ENCODE measurements at regions of chr17 and their contacts with region 1.

Region 1: GRCh38 chr17:81253358-81254131 is 14.4 kb downstream of the NDUFAF8 start:
- DNase-seq: peak; percentile 34 to 74 (median 63)
- ATAC-seq: peak; percentile 83
- H3K4me3 ChIP-seq: no peak overlapping the region
- H3K4me3 Mint-ChIP-seq: no peak overlapping the region
- H3K27ac ChIP-seq: no peak overlapping the region
- H3K27ac Mint-ChIP-seq: peak overlapping the region in 5 of 9 donors; percentile 2 to 67 (median 27)
- H3K4me1 ChIP-seq: no peaks in the 10 kb centered on the region
- H3K4me1 Mint-ChIP-seq: peaks cover 6 to 10% (median 7%) of the 10 kb centered on the region in 7 donors
- H3K27me3 ChIP-seq: no peaks in the 10 kb centered on the region
- H3K27me3 Mint-ChIP-seq: no peaks in the 10 kb centered on the region

Region 2: GRCh38 chr17:81387100-81388090 is 133.8 kb after region 1 on chr17:
- CTCF ChIA-PET with region 1: no interaction called
- POLR2A ChIA-PET with region 1: no interaction called
- intact Hi-C with region 1: loop called in 1 of 2 experiments (anchors 10 kb)
- DNase-seq: peak in 1 of 9 donors; percentile 71
- ATAC-seq: peak; percentile 67
- H3K4me3 ChIP-seq: peak overlapping the region; percentile 38
- H3K4me3 Mint-ChIP-seq: peak overlapping the region; percentile 44 to 83 (median 70)
- H3K27ac ChIP-seq: no peak overlapping the region
- H3K27ac Mint-ChIP-seq: no peak overlapping the region
- H3K4me1 ChIP-seq: no peaks in the 10 kb centered on the region
- H3K4me1 Mint-ChIP-seq: peaks cover 0 to 5% (median 0%) of the 10 kb centered on the region in 7 donors
- H3K27me3 ChIP-seq: peaks cover 0 to 30% of the 10 kb centered on the region in 2 donors
- H3K27me3 Mint-ChIP-seq: peaks cover 33 to 61% (median 49%) of the 10 kb centered on the region in 5 donors

Region 3: DNA sequence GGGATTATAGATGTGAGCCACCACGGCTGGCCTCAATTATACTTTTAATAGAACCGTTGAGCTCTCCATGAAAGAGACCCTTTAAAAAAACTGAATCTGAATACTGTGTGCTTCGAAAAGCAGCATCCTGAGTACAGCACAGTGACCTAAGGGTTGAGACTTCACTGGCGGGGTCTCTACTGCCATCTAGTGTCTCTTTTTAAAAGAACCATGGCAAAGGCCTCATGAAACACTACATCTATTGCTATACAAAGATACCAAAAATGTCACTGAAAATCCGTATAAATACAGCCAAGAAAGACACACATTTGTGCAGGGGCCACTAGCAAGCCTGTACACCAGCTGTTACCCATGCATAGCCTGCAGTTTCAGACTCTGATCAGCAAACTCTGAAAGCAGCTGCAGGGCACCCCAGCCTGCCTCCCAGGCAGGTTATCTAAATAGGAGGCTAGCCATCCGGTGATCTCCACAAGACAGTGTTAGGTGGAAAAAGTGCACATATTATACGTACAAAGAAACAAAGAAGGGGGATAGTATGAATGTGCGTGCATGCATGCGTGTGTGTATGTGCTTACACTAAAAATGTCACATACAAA is 348.1 kb after region 1 on chr17:
- CTCF ChIA-PET with region 1: interaction called, 6 read pairs
- POLR2A ChIA-PET with region 1: no interaction called
- intact Hi-C with region 1: loop called in 1 of 2 experiments (anchors 1 kb)
- DNase-seq: peak in 8 of 9 donors; percentile 30 to 69 (median 60)
- ATAC-seq: peak; percentile 92
- H3K4me3 ChIP-seq: no peak overlapping the region
- H3K4me3 Mint-ChIP-seq: no peak overlapping the region
- H3K27ac ChIP-seq: no peak overlapping the region
- H3K27ac Mint-ChIP-seq: peak overlapping the region in 3 of 9 donors; percentile 1 to 48 (median 25)
- H3K4me1 ChIP-seq: peaks cover 0 to 6% of the 10 kb centered on the region in 2 donors
- H3K4me1 Mint-ChIP-seq: peaks cover 2 to 14% (median 9%) of the 10 kb centered on the region in 7 donors
- H3K27me3 ChIP-seq: no peaks in the 10 kb centered on the region
- H3K27me3 Mint-ChIP-seq: no peaks in the 10 kb centered on the region

Region 4: GRCh38 chr17:82022981-82023374 is 769.4 kb after region 1 on chr17 and contains the start of gene LRRC45:
- CTCF ChIA-PET with region 1: no interaction called
- POLR2A ChIA-PET with region 1: no interaction called
- intact Hi-C with region 1: no loop called
- DNase-seq: peak; percentile 97 to 100 (median 100)
- ATAC-seq: peak; percentile 97
- H3K4me3 ChIP-seq: peak within 1 kb of the TSS; percentile 71
- H3K4me3 Mint-ChIP-seq: peak within 1 kb of the TSS; percentile 80 to 91 (median 84)
- H3K27ac ChIP-seq: peak within 1 kb of the TSS; percentile 65
- H3K27ac Mint-ChIP-seq: peak within 1 kb of the TSS in 7 of 9 donors; percentile 41 to 88 (median 66)
- H3K4me1 ChIP-seq: peaks cover 16 to 29% of the 10 kb centered on the region in 2 donors
- H3K4me1 Mint-ChIP-seq: peaks cover 7 to 28% (median 22%) of the 10 kb centered on the region in 7 donors
- H3K27me3 ChIP-seq: no peaks in the 10 kb centered on the region
- H3K27me3 Mint-ChIP-seq: no peaks in the 10 kb centered on the region
- total RNA-seq, gene LRRC45: 9.2 to 39.1 (median 15.0) TPM